ENCODE measurements at regions of chr9 and their contacts with region 1.

Region 1: GRCh38 chr9:123349691-123350480 is 6.1 kb upstream of the CRB2 start:
- DNase-seq: peak in 1 of 2 donors; percentile 72
- ATAC-seq: peak; percentile 83
- H3K4me3 ChIP-seq: no peak overlapping the region
- H3K27ac ChIP-seq: no peak overlapping the region
- H3K4me1 ChIP-seq: no peaks in the 10 kb centered on the region
- H3K27me3 ChIP-seq: no peaks in the 10 kb centered on the region

Region 2: GRCh38 chr9:122464633-122465567 is 885.0 kb before region 1 on chr9:
- intact Hi-C with region 1: loop called in 1 of 2 experiments (anchors 5 kb)
- DNase-seq: peak; percentile 76 to 78
- ATAC-seq: peak; percentile 84
- H3K4me3 ChIP-seq: peak overlapping the region; percentile 26 to 38
- H3K27ac ChIP-seq: no peak overlapping the region
- H3K4me1 ChIP-seq: no peaks in the 10 kb centered on the region
- H3K27me3 ChIP-seq: no peaks in the 10 kb centered on the region

Region 3: DNA sequence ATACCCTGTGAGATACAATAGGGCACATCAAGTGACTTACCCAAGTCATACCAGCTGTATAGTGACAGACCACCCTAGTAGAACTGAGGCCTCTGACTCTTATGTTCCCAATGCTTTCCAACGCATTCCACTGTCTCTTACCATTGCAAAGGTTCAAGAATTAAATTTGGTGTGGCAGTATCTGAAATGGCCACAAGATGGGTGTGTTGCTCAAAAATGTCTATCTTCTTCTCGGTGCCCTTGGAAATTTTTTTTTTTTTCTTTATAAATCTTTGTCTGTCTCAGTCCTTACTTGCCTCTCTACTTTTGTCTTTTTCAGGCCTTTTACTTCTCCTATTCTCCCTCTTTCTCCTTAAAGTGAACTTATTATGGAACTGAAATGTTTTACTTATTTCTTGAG is 268.1 kb before region 1 on chr9:
- intact Hi-C with region 1: loop called (anchors 5 kb)
- DNase-seq: no peak
- ATAC-seq: no peak
- H3K4me3 ChIP-seq: no peak overlapping the region
- H3K27ac ChIP-seq: no peak overlapping the region
- H3K4me1 ChIP-seq: no peaks in the 10 kb centered on the region
- H3K27me3 ChIP-seq: no peaks in the 10 kb centered on the region

Region 4: DNA sequence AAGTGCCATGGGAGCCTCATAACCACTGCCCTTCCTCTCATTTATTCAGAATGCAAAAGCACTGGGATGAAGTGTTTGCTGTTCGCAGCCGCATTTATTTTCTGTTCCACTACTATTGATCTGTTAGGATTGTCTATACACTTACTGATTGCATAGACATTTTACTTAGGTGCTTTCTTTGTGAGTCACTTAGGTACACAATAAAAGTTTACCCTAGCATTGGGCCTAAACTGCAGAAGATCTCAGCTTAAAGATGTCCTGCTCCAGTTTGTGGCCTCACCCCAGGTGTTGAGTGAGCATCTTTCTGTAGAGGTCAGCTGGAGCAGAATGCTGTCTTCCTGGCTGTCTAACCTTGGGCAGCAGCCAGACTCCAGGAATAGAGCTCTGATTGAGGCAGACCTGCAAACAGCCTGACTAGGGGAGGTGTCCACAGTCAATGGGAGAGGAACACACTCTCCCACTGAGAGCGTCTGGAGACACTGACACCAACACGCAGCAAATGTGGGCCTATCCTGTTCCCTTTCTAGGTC is 262.5 kb before region 1 on chr9:
- intact Hi-C with region 1: loop called (anchors 5 kb)
- DNase-seq: no peak
- ATAC-seq: peak; percentile 46
- H3K4me3 ChIP-seq: no peak overlapping the region
- H3K27ac ChIP-seq: no peak overlapping the region
- H3K4me1 ChIP-seq: peaks cover 0 to 2% of the 10 kb centered on the region in 2 donors
- H3K27me3 ChIP-seq: no peaks in the 10 kb centered on the region

Region 5: DNA sequence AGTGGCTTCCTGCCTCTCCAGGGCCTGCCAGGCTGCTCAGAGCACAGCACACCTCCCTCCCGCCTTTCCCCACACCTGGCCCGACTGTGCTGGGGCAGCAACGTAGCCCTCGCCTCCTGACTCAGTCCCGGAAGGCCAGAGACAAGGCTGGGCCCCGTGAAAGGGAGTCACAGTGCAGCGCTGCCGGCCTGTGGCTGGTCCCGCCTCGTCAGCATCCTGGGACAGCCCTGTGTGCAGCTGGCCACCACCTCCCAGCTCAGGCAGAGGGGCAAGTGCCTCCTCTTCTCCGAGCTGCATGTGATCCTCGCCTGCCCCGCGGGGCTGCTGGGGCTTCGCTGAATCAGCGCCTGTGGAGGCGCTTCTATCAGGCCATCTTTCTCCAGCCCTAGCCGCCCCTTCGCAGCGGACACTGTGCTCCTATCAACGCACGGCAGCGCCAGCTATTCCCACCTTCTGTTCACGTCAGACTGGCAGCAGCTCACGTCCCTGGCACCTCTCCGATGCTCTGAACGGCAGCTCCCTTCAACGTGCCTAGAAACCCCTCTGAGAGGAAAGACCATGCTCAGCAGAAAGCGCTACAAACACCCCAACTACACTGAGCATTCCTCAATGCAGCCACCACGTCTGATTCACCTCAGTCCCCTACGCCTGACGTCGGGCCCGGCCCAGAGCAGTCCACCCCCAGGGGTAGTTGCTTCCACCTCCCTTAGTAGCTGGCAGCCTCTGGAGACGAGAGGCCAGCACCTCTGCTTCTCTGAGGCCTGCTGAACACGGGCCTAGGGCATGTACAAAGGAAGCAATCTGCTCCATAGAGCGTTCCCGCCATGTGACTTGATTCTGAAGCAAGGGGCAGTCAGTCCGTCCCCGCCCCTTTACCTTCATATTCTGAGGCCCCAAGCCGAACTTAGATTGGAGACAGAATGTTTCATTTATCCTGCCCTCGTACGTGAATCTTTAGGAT is 237.6 kb before region 1 on chr9:
- intact Hi-C with region 1: loop called in 1 of 2 experiments (anchors 10 kb)
- DNase-seq: no peak
- ATAC-seq: peak; percentile 43
- H3K4me3 ChIP-seq: no peak overlapping the region
- H3K27ac ChIP-seq: no peak overlapping the region
- H3K4me1 ChIP-seq: peaks cover 0 to under 1% of the 10 kb centered on the region in 2 donors
- H3K27me3 ChIP-seq: no peaks in the 10 kb centered on the region

Region 6: GRCh38 chr9:123268240-123268949 is 81.5 kb before region 1 on chr9 and contains the start of gene STRBP:
- intact Hi-C with region 1: loop called in 1 of 2 experiments (anchors 10 kb)
- DNase-seq: peak; percentile 92 to 97
- ATAC-seq: peak; percentile 97
- H3K4me3 ChIP-seq: peak within 1 kb of the TSS; percentile 37 to 97
- H3K27ac ChIP-seq: no peak within 1 kb of the TSS
- H3K4me1 ChIP-seq: no peaks in the 10 kb centered on the region
- H3K27me3 ChIP-seq: no peaks in the 10 kb centered on the region
- total RNA-seq, gene STRBP: 6.8 to 10.3 TPM

Region 7: GRCh38 chr9:123338710-123339665 is 10.9 kb before region 1 on chr9:
- intact Hi-C with region 1: no loop called
- DNase-seq: peak in 1 of 2 donors; percentile 63
- ATAC-seq: peak; percentile 51
- H3K4me3 ChIP-seq: peak overlapping the region; percentile 14 to 19
- H3K27ac ChIP-seq: no peak overlapping the region
- H3K4me1 ChIP-seq: no peaks in the 10 kb centered on the region
- H3K27me3 ChIP-seq: no peaks in the 10 kb centered on the region

Measured in aorta (tissue), 5 donors.